ENCODE measurements at regions of chr6 and their contacts with region 1.

Region 1: GRCh38 chr6:33633462-33634158 is 12.5 kb downstream of the ITPR3 start:
- DNase-seq: peak in 8 of 9 experiments; percentile 38 to 85 (median 53)
- ATAC-seq: peak; percentile 77
- H3K4me3 ChIP-seq: peak overlapping the region; percentile 48 to 54
- H3K4me3 Mint-ChIP-seq: peak overlapping the region; percentile 85
- H3K27ac ChIP-seq: peak overlapping the region in 1 of 2 experiments; percentile 19
- H3K27ac Mint-ChIP-seq: no peak overlapping the region
- H3K4me1 ChIP-seq: peaks cover 21% of the 10 kb centered on the region
- H3K4me1 Mint-ChIP-seq: peaks cover 55% of the 10 kb centered on the region
- H3K27me3 ChIP-seq: no peaks in the 10 kb centered on the region
- H3K27me3 Mint-ChIP-seq: no peaks in the 10 kb centered on the region
- CTCF ChIP-seq: no peak

Region 2: GRCh38 chr6:33592411-33593054 is 41.1 kb before region 1 on chr6:
- CTCF ChIA-PET with region 1: interaction called, 32 read pairs
- POLR2A ChIA-PET with region 1: no interaction called
- intact Hi-C with region 1: loop called (anchors 1 to 2 kb)
- DNase-seq: peak in 8 of 9 experiments; percentile 29 to 71 (median 54)
- ATAC-seq: peak; percentile 64
- H3K4me3 ChIP-seq: peak overlapping the region; percentile 49 to 56
- H3K4me3 Mint-ChIP-seq: peak overlapping the region; percentile 81
- H3K27ac ChIP-seq: peak overlapping the region; percentile 43 to 46
- H3K27ac Mint-ChIP-seq: peak overlapping the region; percentile 88
- H3K4me1 ChIP-seq: peaks cover 13% of the 10 kb centered on the region
- H3K4me1 Mint-ChIP-seq: peaks cover 28% of the 10 kb centered on the region
- H3K27me3 ChIP-seq: no peaks in the 10 kb centered on the region
- H3K27me3 Mint-ChIP-seq: no peaks in the 10 kb centered on the region
- CTCF ChIP-seq: no peak

Region 3: GRCh38 chr6:33607784-33608161 is 25.8 kb before region 1 on chr6:
- CTCF ChIA-PET with region 1: no interaction called
- POLR2A ChIA-PET with region 1: no interaction called
- intact Hi-C with region 1: loop called in 1 of 2 experiments (anchors 1 kb)
- DNase-seq: peak in 2 of 9 experiments; percentile 52 to 59
- ATAC-seq: no peak
- H3K4me3 ChIP-seq: no peak overlapping the region
- H3K4me3 Mint-ChIP-seq: no peak overlapping the region
- H3K27ac ChIP-seq: no peak overlapping the region
- H3K27ac Mint-ChIP-seq: no peak overlapping the region
- H3K4me1 ChIP-seq: no peaks in the 10 kb centered on the region
- H3K4me1 Mint-ChIP-seq: peaks cover 1% of the 10 kb centered on the region
- H3K27me3 ChIP-seq: no peaks in the 10 kb centered on the region
- H3K27me3 Mint-ChIP-seq: peaks cover 4% of the 10 kb centered on the region
- CTCF ChIP-seq: no peak

Region 4: DNA sequence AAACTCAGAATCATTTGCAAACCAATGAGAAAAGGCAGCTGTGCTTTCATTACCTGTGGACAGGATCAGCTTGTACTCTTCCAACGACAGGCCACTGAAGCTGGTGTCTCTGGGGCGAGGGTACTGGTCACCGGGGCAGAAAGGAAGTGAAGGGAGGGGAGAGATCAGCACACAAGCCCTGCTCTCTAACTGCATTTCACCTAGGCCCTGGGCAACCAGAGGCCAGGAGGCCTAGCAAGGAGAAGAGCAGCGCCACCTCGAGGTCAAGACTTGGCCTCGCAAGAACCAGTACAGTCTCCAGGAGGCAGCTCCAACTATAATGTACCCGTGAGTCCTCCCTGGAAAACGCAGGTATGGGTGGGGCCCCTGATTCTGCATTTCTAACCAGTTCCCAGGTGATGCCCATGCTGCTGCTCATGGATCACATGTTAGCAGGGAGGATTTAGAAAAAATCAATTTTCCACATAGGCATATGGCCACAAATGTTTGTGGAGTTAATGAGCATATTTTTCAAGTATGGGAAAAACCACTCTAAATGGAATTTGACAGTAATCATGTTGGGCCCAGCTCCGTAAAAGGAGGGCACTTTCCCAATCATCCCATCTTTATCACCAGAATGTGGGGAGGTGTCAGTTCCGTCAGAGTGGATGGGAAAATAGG is 66.9 kb after region 1 on chr6:
- CTCF ChIA-PET with region 1: interaction called, 13 read pairs
- POLR2A ChIA-PET with region 1: no interaction called
- intact Hi-C with region 1: loop called (anchors 5 to 10 kb)
- DNase-seq: peak; percentile 46 to 84 (median 78)
- ATAC-seq: peak; percentile 71
- H3K4me3 ChIP-seq: no peak overlapping the region
- H3K4me3 Mint-ChIP-seq: no peak overlapping the region
- H3K27ac ChIP-seq: peak overlapping the region in 1 of 2 experiments; percentile 48
- H3K27ac Mint-ChIP-seq: peak overlapping the region; percentile 60
- H3K4me1 ChIP-seq: peaks cover 31% of the 10 kb centered on the region
- H3K4me1 Mint-ChIP-seq: peaks cover 35% of the 10 kb centered on the region
- H3K27me3 ChIP-seq: no peaks in the 10 kb centered on the region
- H3K27me3 Mint-ChIP-seq: no peaks in the 10 kb centered on the region
- CTCF ChIP-seq: peak; percentile 63

Measured in CD8-positive, alpha-beta T cell (primary cell).